ENCODE measurements at regions of chr14 and their contacts with region 1.

Region 1: GRCh38 chr14:20970983-20971704 is 15.9 kb downstream of the RNASE2 start:
- DNase-seq: peak; percentile 91
- ATAC-seq: peak; percentile 93
- H3K4me3 Mint-ChIP-seq: peak overlapping the region; percentile 89
- H3K27ac Mint-ChIP-seq: peak overlapping the region; percentile 91
- H3K4me1 Mint-ChIP-seq: peaks cover 13% of the 10 kb centered on the region
- H3K27me3 Mint-ChIP-seq: peaks cover 24% of the 10 kb centered on the region
- CTCF ChIP-seq: peak; percentile 67

Region 2: GRCh38 chr14:20743256-20743959 is 227.7 kb before region 1 on chr14:
- CTCF ChIA-PET with region 1: interaction called, 10 read pairs
- POLR2A ChIA-PET with region 1: no interaction called
- DNase-seq: no peak
- ATAC-seq: no peak
- H3K4me3 Mint-ChIP-seq: no peak overlapping the region
- H3K27ac Mint-ChIP-seq: no peak overlapping the region
- H3K4me1 Mint-ChIP-seq: peaks cover 7% of the 10 kb centered on the region
- H3K27me3 Mint-ChIP-seq: peaks cover 2% of the 10 kb centered on the region; the same call in 1 of the 2 replicates
- CTCF ChIP-seq: no peak

Region 3: DNA sequence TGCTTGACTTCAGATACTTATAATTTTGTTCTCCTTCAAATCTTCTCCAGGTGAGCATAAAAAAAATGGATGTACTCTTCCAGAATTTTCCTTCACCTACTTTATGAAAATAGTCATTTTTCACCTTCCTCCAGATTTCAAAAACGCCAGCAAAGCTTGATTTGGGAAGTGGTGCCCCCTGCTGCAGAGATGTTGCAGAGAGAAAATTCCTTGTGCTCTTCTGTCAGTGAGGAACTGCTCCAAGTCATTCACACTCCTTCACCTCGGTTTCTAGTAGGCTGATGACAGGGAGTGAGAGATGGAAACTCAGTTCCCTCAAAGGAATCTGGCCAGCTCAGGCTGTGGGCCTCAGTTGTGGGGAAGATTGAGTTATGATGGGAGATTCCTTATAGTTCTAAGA is 104.2 kb before region 1 on chr14:
- CTCF ChIA-PET with region 1: interaction called, 52 read pairs
- POLR2A ChIA-PET with region 1: interaction called, 4 read pairs
- DNase-seq: peak; percentile 30
- ATAC-seq: peak; percentile 73
- H3K4me3 Mint-ChIP-seq: no peak overlapping the region
- H3K27ac Mint-ChIP-seq: no peak overlapping the region
- H3K4me1 Mint-ChIP-seq: no peaks in the 10 kb centered on the region; the same call in 1 of the 2 replicates
- H3K27me3 Mint-ChIP-seq: peaks cover 21% of the 10 kb centered on the region
- CTCF ChIP-seq: no peak; the same call in 1 of the 2 replicates

Region 4: GRCh38 chr14:20956376-20956976 is 14.7 kb before region 1 on chr14:
- CTCF ChIA-PET with region 1: interaction called, 93 read pairs
- POLR2A ChIA-PET with region 1: interaction called, 8 read pairs
- DNase-seq: no peak
- ATAC-seq: no peak
- H3K4me3 Mint-ChIP-seq: no peak overlapping the region
- H3K27ac Mint-ChIP-seq: no peak overlapping the region
- H3K4me1 Mint-ChIP-seq: peaks cover 5% of the 10 kb centered on the region
- H3K27me3 Mint-ChIP-seq: peaks cover 3% of the 10 kb centered on the region
- CTCF ChIP-seq: no peak

Region 5: DNA sequence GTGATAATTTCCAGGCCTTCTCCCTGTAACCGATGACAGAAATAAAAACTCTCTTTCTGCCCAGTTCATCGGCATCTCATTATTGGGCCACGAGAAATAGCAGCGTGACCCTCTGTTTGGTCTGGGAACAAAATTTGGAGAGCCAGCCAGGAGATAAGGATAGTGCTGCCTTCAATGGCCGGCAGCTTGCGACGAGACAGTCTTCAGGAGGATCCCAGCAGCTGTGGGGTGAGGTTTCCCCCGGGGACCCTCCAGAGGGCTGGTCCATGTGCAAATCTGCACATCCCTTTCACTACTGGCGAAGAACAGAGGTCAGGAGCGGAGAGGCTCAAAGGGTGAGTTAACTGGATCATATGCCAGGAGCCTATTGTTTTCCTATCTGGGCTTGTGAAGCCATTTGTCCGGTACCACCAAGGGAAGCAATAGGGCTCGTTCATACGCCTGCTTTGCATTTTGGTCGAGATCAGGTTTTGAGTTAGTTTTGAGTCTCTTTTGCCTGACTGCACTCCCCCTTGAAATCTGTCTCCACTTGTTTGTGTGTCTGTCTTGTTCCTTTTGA is 32.7 kb after region 1 on chr14:
- CTCF ChIA-PET with region 1: interaction called, 65 read pairs
- POLR2A ChIA-PET with region 1: interaction called, 4 read pairs
- DNase-seq: no peak
- ATAC-seq: no peak
- H3K4me3 Mint-ChIP-seq: no peak overlapping the region
- H3K27ac Mint-ChIP-seq: no peak overlapping the region
- H3K4me1 Mint-ChIP-seq: peaks cover 9% of the 10 kb centered on the region
- H3K27me3 Mint-ChIP-seq: no peaks in the 10 kb centered on the region; the same call in 1 of the 2 replicates
- CTCF ChIP-seq: no peak

Region 6: GRCh38 chr14:21071225-21072030 is 100.3 kb after region 1 on chr14:
- CTCF ChIA-PET with region 1: interaction called, 34 read pairs
- POLR2A ChIA-PET with region 1: no interaction called
- DNase-seq: peak; percentile 88
- ATAC-seq: peak; percentile 46
- H3K4me3 Mint-ChIP-seq: peak overlapping the region; percentile 89
- H3K27ac Mint-ChIP-seq: peak overlapping the region; percentile 80
- H3K4me1 Mint-ChIP-seq: peaks cover 33% of the 10 kb centered on the region
- H3K27me3 Mint-ChIP-seq: peaks cover 4% of the 10 kb centered on the region; the same call in 1 of the 2 replicates
- CTCF ChIP-seq: no peak